ENCODE measurements at regions of chr18 and their contacts with region 1.

Region 1: GRCh38 chr18:45839414-45840395 is 14.2 kb downstream of the SIGLEC15 start:
- DNase-seq: no peak
- H3K4me3 ChIP-seq: no peak overlapping the region
- CTCF ChIP-seq: peak; percentile 81

Region 2: GRCh38 chr18:45690975-45691815 is 148.5 kb before region 1 on chr18:
- CTCF ChIA-PET with region 1: interaction called, 126 read pairs
- POLR2A ChIA-PET with region 1: no interaction called
- DNase-seq: no peak
- H3K4me3 ChIP-seq: 0 out of 2 replicates have a peak overlapping the region, but pooled peaks have one; percentile 3
- CTCF ChIP-seq: peak; percentile 89

Region 3: GRCh38 chr18:45722899-45723298 is 116.8 kb before region 1 on chr18:
- CTCF ChIA-PET with region 1: interaction called, 53 read pairs
- POLR2A ChIA-PET with region 1: no interaction called
- DNase-seq: no peak
- H3K4me3 ChIP-seq: no peak overlapping the region
- CTCF ChIP-seq: peak; percentile 95

Region 4: GRCh38 chr18:45730832-45731575 is 108.7 kb before region 1 on chr18:
- CTCF ChIA-PET with region 1: interaction called, 28 read pairs
- POLR2A ChIA-PET with region 1: no interaction called
- DNase-seq: peak; percentile 50
- H3K4me3 ChIP-seq: no peak overlapping the region
- CTCF ChIP-seq: no peak

Region 5: GRCh38 chr18:45850021-45850420 is 10.3 kb after region 1 on chr18:
- CTCF ChIA-PET with region 1: interaction called, 34 read pairs
- POLR2A ChIA-PET with region 1: no interaction called
- DNase-seq: no peak
- H3K4me3 ChIP-seq: no peak overlapping the region
- CTCF ChIP-seq: peak; percentile 44

Region 6: GRCh38 chr18:45856531-45856930 is 16.8 kb after region 1 on chr18:
- CTCF ChIA-PET with region 1: interaction called, 34 read pairs
- POLR2A ChIA-PET with region 1: no interaction called
- DNase-seq: peak; percentile 42
- H3K4me3 ChIP-seq: no peak overlapping the region
- CTCF ChIP-seq: no peak

Region 7: GRCh38 chr18:46097801-46098615 is 258.3 kb after region 1 on chr18 and contains the start of gene ATP5F1A:
- CTCF ChIA-PET with region 1: no interaction called
- POLR2A ChIA-PET with region 1: no interaction called
- DNase-seq: no peak
- H3K4me3 ChIP-seq: peak within 1 kb of the TSS; percentile 97
- CTCF ChIP-seq: peak; percentile 12

Measured in AG04449 (cell line).